ENCODE measurements at regions of chr1 and their contacts with region 1.

Region 1: DNA sequence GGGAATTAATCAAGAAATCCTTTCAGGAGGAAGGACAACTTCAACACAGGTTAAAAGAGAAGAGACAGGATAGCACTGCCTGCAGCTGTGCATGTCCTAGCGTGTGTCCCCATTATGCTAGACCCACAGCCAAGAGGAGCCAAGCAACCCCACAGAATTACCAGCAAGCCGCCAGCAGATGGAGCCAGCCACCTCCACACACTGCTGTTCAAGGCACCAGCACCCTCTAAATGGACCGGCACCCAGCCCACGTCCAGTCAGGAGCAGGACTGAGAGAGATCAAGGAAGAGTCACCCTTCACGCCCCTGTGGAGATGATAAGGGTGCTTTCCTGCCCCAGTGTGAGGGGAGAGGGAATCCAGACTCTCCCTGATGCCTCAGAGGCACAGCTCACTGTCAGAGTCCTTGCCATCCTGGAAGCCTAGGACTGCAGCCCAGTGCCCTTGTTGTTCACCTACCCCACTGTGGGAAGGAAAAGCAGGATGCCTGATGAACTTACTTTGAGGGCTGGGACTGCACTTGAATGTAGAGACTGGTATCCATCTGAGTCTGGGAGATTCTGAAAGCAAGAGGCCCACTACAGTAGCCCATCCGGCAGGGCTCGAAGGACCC is 37.1 kb upstream of the CTTNBP2NL start:
- DNase-seq: peak; percentile 64
- H3K4me3 Mint-ChIP-seq: peak overlapping the region; percentile 62
- H3K27ac Mint-ChIP-seq: peak overlapping the region; percentile 72
- H3K4me1 Mint-ChIP-seq: peaks cover 31% of the 10 kb centered on the region
- H3K27me3 Mint-ChIP-seq: no peaks in the 10 kb centered on the region
- CTCF ChIP-seq: peak; percentile 82

Region 2: GRCh38 chr1:111998332-111998731 is 360.6 kb before region 1 on chr1:
- CTCF ChIA-PET with region 1: no interaction called
- POLR2A ChIA-PET with region 1: no interaction called
- intact Hi-C with region 1: no loop called
- DNase-seq: no peak
- H3K4me3 Mint-ChIP-seq: no peak overlapping the region
- H3K27ac Mint-ChIP-seq: no peak overlapping the region
- H3K4me1 Mint-ChIP-seq: no peaks in the 10 kb centered on the region
- H3K27me3 Mint-ChIP-seq: peaks cover 75% of the 10 kb centered on the region
- CTCF ChIP-seq: no peak

Region 3: GRCh38 chr1:112092656-112093371 is 266.1 kb before region 1 on chr1:
- CTCF ChIA-PET with region 1: no interaction called
- POLR2A ChIA-PET with region 1: no interaction called
- intact Hi-C with region 1: no loop called
- DNase-seq: no peak
- H3K4me3 Mint-ChIP-seq: no peak overlapping the region
- H3K27ac Mint-ChIP-seq: no peak overlapping the region
- H3K4me1 Mint-ChIP-seq: no peaks in the 10 kb centered on the region
- H3K27me3 Mint-ChIP-seq: peaks cover 75% of the 10 kb centered on the region
- CTCF ChIP-seq: no peak

Region 4: DNA sequence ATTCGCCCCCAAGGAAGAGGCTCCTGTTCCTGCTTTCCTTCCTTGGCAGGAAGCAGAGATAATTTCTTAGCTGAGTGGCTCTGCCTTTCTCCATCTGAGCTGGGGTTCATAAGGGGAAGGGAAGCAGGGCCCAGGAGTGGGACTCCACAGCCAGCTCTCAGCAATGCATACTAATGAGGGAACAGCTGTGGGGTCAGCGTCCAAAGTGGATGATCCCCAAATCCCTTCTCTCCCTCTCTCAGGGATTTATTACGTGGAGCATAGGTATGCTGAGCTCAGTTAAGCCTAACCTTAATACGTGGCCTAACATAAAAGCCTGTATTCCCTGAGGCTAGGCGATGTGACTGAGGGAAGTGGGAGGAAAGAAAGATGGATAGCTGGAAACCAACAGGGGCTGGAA is 50.2 kb before region 1 on chr1:
- CTCF ChIA-PET with region 1: interaction called, 20 read pairs
- POLR2A ChIA-PET with region 1: no interaction called
- intact Hi-C with region 1: no loop called
- DNase-seq: no peak
- H3K4me3 Mint-ChIP-seq: no peak overlapping the region
- H3K27ac Mint-ChIP-seq: no peak overlapping the region
- H3K4me1 Mint-ChIP-seq: no peaks in the 10 kb centered on the region
- H3K27me3 Mint-ChIP-seq: peaks cover 46% of the 10 kb centered on the region
- CTCF ChIP-seq: no peak

Region 5: DNA sequence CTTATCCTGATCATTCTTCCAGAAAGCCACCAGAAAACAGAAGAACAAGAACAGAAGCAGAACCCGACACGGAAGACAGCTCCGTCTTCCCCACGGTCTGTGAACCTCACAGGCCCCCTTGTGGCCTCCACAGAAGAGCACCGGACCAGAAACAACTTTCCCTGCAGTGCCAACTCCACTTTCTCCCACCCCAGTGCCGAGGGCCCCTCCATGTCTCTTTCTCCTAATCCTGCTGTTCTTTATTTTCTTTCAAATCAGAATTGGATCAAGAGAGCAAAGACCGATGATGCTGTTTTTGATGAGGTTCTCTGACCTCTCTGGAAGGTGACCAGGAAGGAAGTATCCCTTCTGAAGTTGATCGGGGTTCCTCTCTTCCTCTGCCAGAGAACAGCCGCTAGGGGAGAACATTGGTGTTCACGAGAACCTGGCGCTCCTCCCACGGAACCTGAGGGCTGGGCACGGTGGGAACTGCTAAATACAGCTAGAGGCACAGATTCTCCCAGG is 21.8 kb before region 1 on chr1:
- CTCF ChIA-PET with region 1: interaction called, 20 read pairs
- POLR2A ChIA-PET with region 1: no interaction called
- intact Hi-C with region 1: no loop called
- DNase-seq: peak; percentile 55
- H3K4me3 Mint-ChIP-seq: no peak overlapping the region
- H3K27ac Mint-ChIP-seq: peak overlapping the region; percentile 36
- H3K4me1 Mint-ChIP-seq: peaks cover 26% of the 10 kb centered on the region
- H3K27me3 Mint-ChIP-seq: peaks cover 12% of the 10 kb centered on the region
- CTCF ChIP-seq: peak; percentile 79

Region 6: DNA sequence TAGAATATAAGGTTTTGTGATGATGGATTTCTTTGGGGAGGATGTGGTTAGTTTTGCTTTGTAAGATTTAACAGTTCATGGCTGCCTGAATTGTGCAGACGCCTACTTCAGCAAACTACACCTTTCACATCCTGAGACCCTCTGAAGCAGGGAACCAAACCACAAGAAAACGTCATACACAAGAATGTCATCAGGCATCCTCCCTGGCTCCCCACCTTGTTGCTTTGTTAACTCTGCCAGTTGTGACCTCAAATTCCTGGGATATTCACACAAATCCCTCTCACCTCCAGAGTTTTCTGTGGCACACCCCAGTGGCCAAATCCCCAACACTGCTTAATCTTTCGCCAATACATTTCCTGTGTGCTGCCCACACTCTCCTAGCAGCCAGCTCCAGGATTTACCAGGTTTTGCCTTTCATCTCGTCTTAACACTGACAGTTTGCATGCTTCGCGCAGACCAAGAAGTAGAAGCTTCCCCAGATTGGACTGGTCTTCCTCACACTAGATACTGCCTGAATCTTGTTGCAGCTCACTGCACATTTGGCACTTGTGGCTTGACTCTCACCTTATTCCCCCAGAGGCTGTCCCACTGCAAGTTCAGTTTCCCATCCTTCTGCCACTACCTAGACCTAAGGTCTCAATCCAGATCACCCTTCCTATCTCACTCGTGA is 14.0 kb before region 1 on chr1:
- CTCF ChIA-PET with region 1: interaction called, 12 read pairs
- POLR2A ChIA-PET with region 1: no interaction called
- intact Hi-C with region 1: no loop called
- DNase-seq: no peak
- H3K4me3 Mint-ChIP-seq: no peak overlapping the region
- H3K27ac Mint-ChIP-seq: no peak overlapping the region
- H3K4me1 Mint-ChIP-seq: no peaks in the 10 kb centered on the region
- H3K27me3 Mint-ChIP-seq: peaks cover 30% of the 10 kb centered on the region
- CTCF ChIP-seq: no peak

Region 7: DNA sequence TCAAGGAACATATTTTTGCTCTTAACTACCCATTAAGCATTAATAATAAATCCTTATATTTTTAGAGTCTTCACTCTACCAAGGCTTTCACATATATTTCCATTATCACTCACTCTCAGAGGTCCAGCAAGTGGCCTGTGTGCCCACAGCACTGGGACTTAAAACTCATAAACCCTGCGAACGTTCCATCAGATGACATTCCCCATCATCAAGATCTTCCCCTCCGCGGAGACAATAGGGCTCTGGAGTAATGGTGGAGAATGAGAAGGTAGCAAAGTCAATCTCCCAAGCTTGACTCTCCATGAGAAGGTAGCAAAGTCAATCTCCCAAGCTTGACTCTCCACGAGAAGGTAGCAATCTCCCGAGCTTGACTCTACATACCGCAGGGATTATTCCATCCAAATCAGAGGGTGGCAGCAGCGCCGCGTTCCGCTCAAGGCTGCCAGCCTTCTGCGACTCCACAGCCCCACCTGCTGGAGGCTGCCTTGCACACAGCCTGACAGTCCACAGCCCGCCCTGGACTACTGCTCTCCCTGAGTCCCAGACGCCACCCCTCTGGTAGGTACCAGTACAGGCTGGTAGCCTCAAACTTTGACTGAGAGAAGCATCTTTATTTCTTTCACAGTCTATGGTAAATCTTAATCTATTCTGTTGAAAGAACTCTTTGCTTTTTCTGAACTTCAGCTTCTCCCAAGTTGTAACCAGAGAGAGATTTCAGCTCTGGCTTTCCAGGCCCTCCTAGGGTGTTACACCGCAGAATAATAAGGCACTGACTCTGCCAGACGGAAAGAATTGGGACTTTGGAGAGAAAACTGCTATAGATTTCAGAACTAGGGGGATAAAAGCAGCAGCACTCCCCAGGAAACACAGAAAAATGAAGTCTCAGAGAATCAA is 10.7 kb after region 1 on chr1:
- CTCF ChIA-PET with region 1: interaction called, 137 read pairs
- POLR2A ChIA-PET with region 1: interaction called, 3 read pairs
- intact Hi-C with region 1: loop called (anchors 1 kb)
- DNase-seq: peak; percentile 86
- H3K4me3 Mint-ChIP-seq: no peak overlapping the region
- H3K27ac Mint-ChIP-seq: no peak overlapping the region
- H3K4me1 Mint-ChIP-seq: peaks cover 6% of the 10 kb centered on the region
- H3K27me3 Mint-ChIP-seq: peaks cover 19% of the 10 kb centered on the region
- CTCF ChIP-seq: peak; percentile 98

Region 8: DNA sequence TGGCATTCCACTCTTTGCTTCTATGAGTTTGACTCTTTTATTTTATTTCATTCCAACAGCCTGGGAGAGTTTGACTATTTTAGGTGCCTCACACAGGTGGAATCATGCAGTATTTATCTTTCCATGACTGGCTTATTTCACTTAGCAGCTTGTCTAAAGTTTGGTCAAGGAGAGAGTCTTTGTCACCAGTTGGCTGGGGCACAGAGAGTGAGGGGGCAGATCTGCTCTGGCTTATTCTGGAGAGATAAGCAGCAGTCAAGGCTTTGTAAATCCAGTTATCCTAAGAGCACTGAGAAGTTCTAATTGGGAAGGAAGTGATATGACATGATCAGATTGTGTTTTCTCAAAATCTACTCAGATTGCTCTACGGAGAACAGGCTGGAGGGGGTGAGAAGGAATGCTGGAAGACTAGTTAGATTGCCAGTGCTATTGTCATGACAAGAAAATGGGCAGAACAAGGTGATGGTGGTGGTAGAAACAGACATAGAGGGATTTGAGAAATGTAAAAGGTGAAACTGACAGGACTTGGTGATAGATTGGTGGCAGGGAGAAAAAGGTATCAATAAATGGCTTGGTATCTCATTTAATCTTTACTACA is 25.0 kb after region 1 on chr1:
- CTCF ChIA-PET with region 1: interaction called, 15 read pairs
- POLR2A ChIA-PET with region 1: no interaction called
- intact Hi-C with region 1: no loop called
- DNase-seq: no peak
- H3K4me3 Mint-ChIP-seq: no peak overlapping the region
- H3K27ac Mint-ChIP-seq: no peak overlapping the region
- H3K4me1 Mint-ChIP-seq: no peaks in the 10 kb centered on the region
- H3K27me3 Mint-ChIP-seq: peaks cover 51% of the 10 kb centered on the region
- CTCF ChIP-seq: no peak

Region 9: GRCh38 chr1:112466078-112466660 is 107.3 kb after region 1 on chr1:
- CTCF ChIA-PET with region 1: interaction called, 11 read pairs
- POLR2A ChIA-PET with region 1: no interaction called
- intact Hi-C with region 1: no loop called
- DNase-seq: peak; percentile 89
- H3K4me3 Mint-ChIP-seq: peak overlapping the region; percentile 67
- H3K27ac Mint-ChIP-seq: peak overlapping the region; percentile 87
- H3K4me1 Mint-ChIP-seq: peaks cover 15% of the 10 kb centered on the region
- H3K27me3 Mint-ChIP-seq: no peaks in the 10 kb centered on the region
- CTCF ChIP-seq: peak; percentile 76

Region 10: GRCh38 chr1:112496290-112496689 is 137.4 kb after region 1 on chr1:
- CTCF ChIA-PET with region 1: no interaction called
- POLR2A ChIA-PET with region 1: no interaction called
- intact Hi-C with region 1: no loop called
- DNase-seq: no peak
- H3K4me3 Mint-ChIP-seq: no peak overlapping the region
- H3K27ac Mint-ChIP-seq: no peak overlapping the region
- H3K4me1 Mint-ChIP-seq: no peaks in the 10 kb centered on the region
- H3K27me3 Mint-ChIP-seq: no peaks in the 10 kb centered on the region
- CTCF ChIP-seq: no peak

Region 11: DNA sequence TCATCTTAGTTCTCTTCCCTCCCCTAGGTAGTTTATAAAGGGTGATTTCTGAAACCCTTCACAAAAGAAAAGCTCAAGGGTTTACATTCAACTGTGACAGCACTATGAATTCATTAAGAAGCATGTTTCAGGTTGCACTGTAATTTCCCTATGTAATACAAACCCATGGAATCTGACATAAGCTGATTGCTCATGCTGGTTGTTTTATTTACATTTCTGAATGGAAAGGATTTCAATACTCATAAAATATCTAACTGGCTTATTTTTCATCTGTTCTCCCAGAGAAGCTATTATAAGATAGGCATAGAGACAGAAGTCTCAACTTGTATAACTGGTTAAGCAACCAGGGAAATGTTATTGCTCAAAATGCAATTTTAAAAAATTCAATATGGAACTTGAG is 170.4 kb after region 1 on chr1:
- CTCF ChIA-PET with region 1: no interaction called
- POLR2A ChIA-PET with region 1: no interaction called
- intact Hi-C with region 1: no loop called
- DNase-seq: no peak
- H3K4me3 Mint-ChIP-seq: no peak overlapping the region
- H3K27ac Mint-ChIP-seq: no peak overlapping the region
- H3K4me1 Mint-ChIP-seq: no peaks in the 10 kb centered on the region
- H3K27me3 Mint-ChIP-seq: no peaks in the 10 kb centered on the region
- CTCF ChIP-seq: no peak

Measured in MCF 10A (cell line).